CD8-positive, alpha-beta T cell (primary cell): ENCODE measurements at regions of chr13 and their contacts with region 1.

Region 1: GRCh38 chr13:44917589-44918325 is 71.5 kb downstream of the NUFIP1 start:
- DNase-seq: peak; percentile 95 to 99 (median 98)
- ATAC-seq: peak; percentile 78
- H3K4me3 ChIP-seq: peak overlapping the region; percentile 54 to 66
- H3K4me3 Mint-ChIP-seq: no peak overlapping the region
- H3K27ac ChIP-seq: peak overlapping the region; percentile 66 to 90
- H3K27ac Mint-ChIP-seq: no peak overlapping the region
- H3K4me1 ChIP-seq: peaks cover 7% of the 10 kb centered on the region
- H3K4me1 Mint-ChIP-seq: peaks cover 14% of the 10 kb centered on the region
- H3K27me3 ChIP-seq: no peaks in the 10 kb centered on the region
- H3K27me3 Mint-ChIP-seq: no peaks in the 10 kb centered on the region
- CTCF ChIP-seq: peak; percentile 39

Region 2: GRCh38 chr13:43878892-43879754 is 1038.6 kb before region 1 on chr13 and contains the start of gene CCDC122:
- CTCF ChIA-PET with region 1: no interaction called
- POLR2A ChIA-PET with region 1: no interaction called
- intact Hi-C with region 1: loop called (anchors 2 to 10 kb)
- DNase-seq: peak; percentile 37 to 89 (median 69)
- ATAC-seq: peak; percentile 78
- H3K4me3 ChIP-seq: peak within 1 kb of the TSS; percentile 56 to 66
- H3K4me3 Mint-ChIP-seq: peak within 1 kb of the TSS; percentile 90
- H3K27ac ChIP-seq: peak within 1 kb of the TSS in 1 of 2 experiments; percentile 61
- H3K27ac Mint-ChIP-seq: peak within 1 kb of the TSS; percentile 84
- H3K4me1 ChIP-seq: peaks cover 10% of the 10 kb centered on the region
- H3K4me1 Mint-ChIP-seq: peaks cover 14% of the 10 kb centered on the region
- H3K27me3 ChIP-seq: no peaks in the 10 kb centered on the region
- H3K27me3 Mint-ChIP-seq: peaks cover 11% of the 10 kb centered on the region
- CTCF ChIP-seq: no peak
- total RNA-seq, gene CCDC122: not detected

Region 3: DNA sequence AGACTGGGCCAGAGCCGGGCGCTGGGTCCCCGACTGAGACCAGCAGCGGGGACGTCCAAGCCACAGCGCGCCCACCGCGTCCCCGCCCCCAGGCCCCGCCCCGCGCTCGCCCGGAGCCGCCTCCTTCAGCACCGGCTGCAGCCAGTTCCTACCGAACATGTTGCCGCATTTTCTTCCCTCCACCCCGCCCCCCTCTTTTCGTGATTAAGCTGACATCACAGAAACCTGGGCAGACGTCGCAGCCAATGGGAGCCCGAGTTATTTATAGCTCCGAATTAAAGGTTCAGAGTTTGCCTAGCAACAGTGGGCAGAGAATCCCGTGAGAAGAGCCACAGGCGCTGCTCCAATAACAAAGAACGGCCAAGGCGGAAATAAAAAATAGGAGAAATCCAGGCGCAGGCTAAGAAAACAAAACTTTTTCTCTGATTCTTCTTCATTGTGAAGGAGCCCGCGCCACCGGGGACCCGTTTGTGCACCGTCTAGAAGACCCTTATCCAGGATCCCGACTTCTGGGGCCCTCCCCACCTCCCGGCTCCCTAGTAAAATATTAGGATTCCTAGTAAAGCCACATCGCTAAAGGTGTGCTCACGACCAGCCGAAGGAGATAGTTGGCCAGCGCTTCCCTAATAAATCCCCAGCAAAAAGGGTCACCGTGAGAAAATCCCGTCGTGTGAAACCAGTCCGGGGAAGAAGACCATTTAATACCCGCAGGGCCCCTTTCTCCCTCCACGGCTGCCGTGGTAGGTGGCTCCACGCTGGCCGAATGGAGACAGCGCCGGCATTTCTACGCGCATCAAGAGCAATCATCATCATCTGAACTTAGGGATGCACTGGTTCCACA is 482.4 kb before region 1 on chr13:
- CTCF ChIA-PET with region 1: interaction called, 4 read pairs
- POLR2A ChIA-PET with region 1: no interaction called
- intact Hi-C with region 1: loop called in 1 of 2 experiments (anchors 5 kb)
- DNase-seq: peak; percentile 79 to 96 (median 87)
- ATAC-seq: peak; percentile 84
- H3K4me3 ChIP-seq: peak overlapping the region; percentile 57 to 58
- H3K4me3 Mint-ChIP-seq: peak overlapping the region; percentile 89
- H3K27ac ChIP-seq: peak overlapping the region; percentile 49 to 70
- H3K27ac Mint-ChIP-seq: peak overlapping the region; percentile 81
- H3K4me1 ChIP-seq: peaks cover 24% of the 10 kb centered on the region
- H3K4me1 Mint-ChIP-seq: peaks cover 29% of the 10 kb centered on the region
- H3K27me3 ChIP-seq: no peaks in the 10 kb centered on the region
- H3K27me3 Mint-ChIP-seq: peaks cover 5% of the 10 kb centered on the region
- CTCF ChIP-seq: no peak

Region 4: DNA sequence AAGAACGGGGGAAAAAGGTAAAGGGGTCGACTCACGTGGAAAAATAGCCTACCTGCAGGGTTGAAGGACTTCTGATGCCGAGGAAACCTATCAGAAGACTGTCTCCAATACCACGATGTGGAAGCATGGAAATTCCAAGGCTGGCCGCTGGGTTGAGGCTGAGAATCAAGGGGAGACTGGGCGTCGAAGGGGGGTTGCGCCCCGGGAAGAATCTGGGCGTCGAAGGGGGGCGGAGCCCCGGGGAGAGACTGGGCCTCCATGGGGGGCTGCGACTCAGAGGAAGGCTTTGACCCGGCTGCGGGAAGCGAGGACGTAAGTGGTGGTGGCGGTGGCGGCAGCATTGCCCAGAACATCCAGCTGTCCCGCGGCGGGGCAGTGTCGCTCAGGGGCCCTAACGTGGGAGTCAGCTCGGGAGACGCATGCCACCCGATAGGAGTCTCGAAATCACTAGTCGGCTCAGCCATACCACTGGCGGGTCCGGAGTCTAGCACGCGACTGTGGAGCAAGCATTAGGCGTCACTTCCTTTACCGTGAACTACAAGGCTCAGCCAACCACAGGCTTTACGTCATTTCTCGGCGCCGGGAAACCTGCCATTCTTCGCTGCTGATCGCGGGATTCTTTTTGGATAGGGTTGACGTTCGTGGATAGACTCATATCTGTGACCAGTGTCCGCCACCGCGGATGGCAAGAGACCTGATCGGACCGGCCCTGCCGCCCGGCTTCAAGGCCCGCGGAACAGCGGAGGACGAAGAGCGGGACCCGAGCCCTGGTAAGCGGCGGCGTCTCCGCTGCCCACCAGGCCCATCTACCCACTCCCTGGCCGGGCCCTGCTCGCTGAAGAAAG is 71.4 kb after region 1 on chr13 and contains the starts of genes GPALPP1 and NUFIP1:
- CTCF ChIA-PET with region 1: interaction called, 4 read pairs
- POLR2A ChIA-PET with region 1: no interaction called
- intact Hi-C with region 1: loop called (anchors 1 kb)
- DNase-seq: peak; percentile 79 to 96 (median 93)
- ATAC-seq: peak; percentile 94
- H3K4me3 ChIP-seq: peak within 1 kb of the TSS; percentile 88 to 92
- H3K4me3 Mint-ChIP-seq: peak within 1 kb of the TSS; percentile 100
- H3K27ac ChIP-seq: peak within 1 kb of the TSS; percentile 86 to 90
- H3K27ac Mint-ChIP-seq: peak within 1 kb of the TSS; percentile 99
- H3K4me1 ChIP-seq: peaks cover 20% of the 10 kb centered on the region
- H3K4me1 Mint-ChIP-seq: peaks cover 64% of the 10 kb centered on the region
- H3K27me3 ChIP-seq: no peaks in the 10 kb centered on the region
- H3K27me3 Mint-ChIP-seq: no peaks in the 10 kb centered on the region
- CTCF ChIP-seq: no peak
- total RNA-seq, gene GPALPP1: 16.7 to 17.8 TPM
- total RNA-seq, gene NUFIP1: 5.2 to 6.1 TPM

Region 5: GRCh38 chr13:45340926-45341750 is 423.4 kb after region 1 on chr13 and contains the start of gene TPT1:
- CTCF ChIA-PET with region 1: no interaction called
- POLR2A ChIA-PET with region 1: no interaction called
- intact Hi-C with region 1: loop called (anchors 1 to 5 kb)
- DNase-seq: peak; percentile 99 to 100 (median 100)
- ATAC-seq: peak; percentile 86
- H3K4me3 ChIP-seq: peak within 1 kb of the TSS; percentile 83 to 89
- H3K4me3 Mint-ChIP-seq: peak within 1 kb of the TSS; percentile 99
- H3K27ac ChIP-seq: peak within 1 kb of the TSS; percentile 96 to 99
- H3K27ac Mint-ChIP-seq: peak within 1 kb of the TSS; percentile 99
- H3K4me1 ChIP-seq: peaks cover 42% of the 10 kb centered on the region
- H3K4me1 Mint-ChIP-seq: peaks cover 63% of the 10 kb centered on the region
- H3K27me3 ChIP-seq: no peaks in the 10 kb centered on the region
- H3K27me3 Mint-ChIP-seq: no peaks in the 10 kb centered on the region
- CTCF ChIP-seq: no peak
- total RNA-seq, gene TPT1: 8,260 to 8,503 TPM

Region 6: GRCh38 chr13:46052319-46053161 is 1134.8 kb after region 1 on chr13 and contains the start of gene ZC3H13:
- CTCF ChIA-PET with region 1: no interaction called
- POLR2A ChIA-PET with region 1: no interaction called
- intact Hi-C with region 1: loop called in 1 of 2 experiments (anchors 2 kb)
- DNase-seq: peak; percentile 84 to 97 (median 91)
- ATAC-seq: peak; percentile 97
- H3K4me3 ChIP-seq: peak within 1 kb of the TSS; percentile 77 to 89
- H3K4me3 Mint-ChIP-seq: peak within 1 kb of the TSS; percentile 88
- H3K27ac ChIP-seq: peak within 1 kb of the TSS; percentile 89 to 98
- H3K27ac Mint-ChIP-seq: peak within 1 kb of the TSS; percentile 94
- H3K4me1 ChIP-seq: peaks cover 23% of the 10 kb centered on the region
- H3K4me1 Mint-ChIP-seq: peaks cover 46% of the 10 kb centered on the region
- H3K27me3 ChIP-seq: no peaks in the 10 kb centered on the region
- H3K27me3 Mint-ChIP-seq: peaks cover 6% of the 10 kb centered on the region
- CTCF ChIP-seq: peak; percentile 37
- total RNA-seq, gene ZC3H13: 50.7 to 54.2 TPM